HepG2 (cell line): ENCODE measurements at regions of chr20 and their contacts with region 1.

Region 1: DNA sequence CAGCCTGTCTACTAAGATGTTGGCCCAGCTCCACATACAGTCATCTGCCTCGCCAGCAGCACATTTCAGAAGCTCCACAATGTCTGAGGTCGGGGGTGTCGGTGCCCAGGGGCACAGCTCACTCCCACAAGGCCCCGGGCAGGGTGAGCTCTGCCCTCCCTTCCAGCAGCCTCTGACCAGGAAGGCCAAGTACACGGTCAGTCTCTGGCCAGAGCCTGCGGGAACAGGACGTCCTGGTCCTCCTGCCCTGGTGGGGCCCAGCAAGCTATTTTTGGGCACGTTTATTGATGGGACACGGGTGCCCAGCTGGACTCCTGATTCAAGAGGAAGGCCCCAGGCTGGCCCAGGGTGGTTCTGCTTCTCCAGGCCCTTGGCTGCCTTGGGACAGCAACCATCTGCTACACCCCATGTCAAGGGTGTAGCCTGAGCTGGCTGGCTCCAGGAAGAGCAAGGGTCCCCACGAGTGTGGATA is 114.9 kb upstream of the PTPN1 start:
- DNase-seq: no peak
- ATAC-seq: no peak
- H3K4me3 ChIP-seq: no peak overlapping the region
- H3K27ac ChIP-seq: peak overlapping the region; percentile 23
- H3K4me1 ChIP-seq: peaks cover 95% of the 10 kb centered on the region
- H3K27me3 ChIP-seq: no peaks in the 10 kb centered on the region
- CTCF ChIP-seq: no peak
- EP300 ChIP-seq: no peak
- POLR2A ChIP-seq: no peak
- RAD21 ChIP-seq: no peak

Region 2: DNA sequence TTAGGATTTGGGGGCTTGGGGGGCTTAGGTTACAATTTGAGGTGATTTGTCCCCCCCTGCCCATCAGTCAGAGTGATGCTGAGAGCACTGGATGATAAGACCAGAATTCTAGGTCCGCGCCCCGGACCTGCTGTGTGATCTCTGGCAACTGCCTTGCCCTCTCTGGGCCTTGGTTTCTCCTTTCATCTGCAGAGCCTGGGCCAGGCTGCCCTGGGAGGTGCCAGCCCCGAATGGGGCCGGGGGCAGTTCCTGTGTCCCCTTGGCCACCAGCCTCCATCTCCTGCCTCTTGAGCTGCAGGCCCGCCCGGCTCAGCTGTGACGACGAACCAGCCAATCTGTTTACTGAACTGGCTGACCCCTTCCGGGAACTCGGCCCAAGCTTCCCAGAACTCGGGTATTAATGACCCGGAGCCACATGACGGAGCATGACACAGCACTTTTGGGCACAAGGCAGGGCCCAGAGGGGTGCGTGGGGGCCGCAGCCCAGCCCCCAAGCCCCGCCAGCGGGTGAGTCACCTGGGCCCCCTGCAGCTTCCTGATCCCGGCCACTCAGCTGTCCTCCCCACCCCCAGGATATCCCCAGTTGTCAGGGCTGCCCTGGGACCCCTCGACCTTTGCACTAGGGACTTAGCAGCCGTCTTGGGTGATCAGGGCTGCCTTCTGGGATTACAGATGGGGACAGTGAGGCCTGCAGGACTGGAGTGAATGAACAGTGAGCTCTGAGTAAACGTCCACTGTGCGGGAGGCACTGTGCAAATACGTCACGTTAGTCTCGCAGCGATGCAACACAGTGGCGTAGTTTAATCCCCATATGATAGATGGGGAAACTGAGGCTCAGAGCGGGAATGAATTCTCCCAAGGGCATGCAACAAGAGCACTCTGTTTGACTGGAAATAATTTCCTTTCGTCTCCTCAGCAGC is 102.7 kb before region 1 on chr20:
- CTCF ChIA-PET with region 1: no interaction called
- POLR2A ChIA-PET with region 1: interaction called, 17 read pairs
- in situ Hi-C with region 1: loop called (anchors 5 kb)
- intact Hi-C with region 1: no loop called
- DNase-seq: peak; percentile 97
- ATAC-seq: peak; percentile 69
- H3K4me3 ChIP-seq: peak overlapping the region in 1 of 3 experiments; percentile 39; a peak in 3 of 6 replicates
- H3K27ac ChIP-seq: peak overlapping the region; percentile 77
- H3K4me1 ChIP-seq: peaks cover 68% of the 10 kb centered on the region
- H3K27me3 ChIP-seq: no peaks in the 10 kb centered on the region
- CTCF ChIP-seq: peak; percentile 41
- EP300 ChIP-seq: peak; percentile 96 to 99
- POLR2A ChIP-seq: peak in 1 of 2 experiments; percentile 14; a peak in 2 of 4 replicates
- RAD21 ChIP-seq: peak; percentile 63

Region 3: GRCh38 chr20:50366270-50367103 is 28.8 kb before region 1 on chr20:
- CTCF ChIA-PET with region 1: no interaction called
- POLR2A ChIA-PET with region 1: interaction called, 58 read pairs
- in situ Hi-C with region 1: no loop called
- intact Hi-C with region 1: loop called (anchors 1 kb)
- DNase-seq: peak; percentile 100
- ATAC-seq: peak; percentile 77
- H3K4me3 ChIP-seq: peak overlapping the region in 2 of 3 experiments; percentile 29 to 31; a peak in 2 of 6 replicates
- H3K27ac ChIP-seq: peak overlapping the region; percentile 71
- H3K4me1 ChIP-seq: peaks cover 87% of the 10 kb centered on the region
- H3K27me3 ChIP-seq: peaks cover 0 to 12% of the 10 kb centered on the region in 2 experiments; a peak in 3 of 5 replicates
- CTCF ChIP-seq: 0 out of 2 replicates have a peak, but pooled peaks have one; percentile 11
- EP300 ChIP-seq: peak; percentile 79 to 93
- POLR2A ChIP-seq: no peak
- RAD21 ChIP-seq: peak; percentile 8; the same call in 1 of the 2 replicates

Region 4: GRCh38 chr20:50409495-50409894 is 14.2 kb after region 1 on chr20:
- CTCF ChIA-PET with region 1: no interaction called
- POLR2A ChIA-PET with region 1: interaction called, 299 read pairs
- in situ Hi-C with region 1: no loop called
- intact Hi-C with region 1: no loop called
- DNase-seq: no peak
- ATAC-seq: no peak
- H3K4me3 ChIP-seq: no peak overlapping the region
- H3K27ac ChIP-seq: no peak overlapping the region
- H3K4me1 ChIP-seq: peaks cover 91% of the 10 kb centered on the region
- H3K27me3 ChIP-seq: no peaks in the 10 kb centered on the region
- CTCF ChIP-seq: no peak
- EP300 ChIP-seq: 0 out of 4 replicates have a peak, but pooled peaks of 1 of the 2 experiments have one; percentile 16
- POLR2A ChIP-seq: no peak
- RAD21 ChIP-seq: no peak

Region 5: DNA sequence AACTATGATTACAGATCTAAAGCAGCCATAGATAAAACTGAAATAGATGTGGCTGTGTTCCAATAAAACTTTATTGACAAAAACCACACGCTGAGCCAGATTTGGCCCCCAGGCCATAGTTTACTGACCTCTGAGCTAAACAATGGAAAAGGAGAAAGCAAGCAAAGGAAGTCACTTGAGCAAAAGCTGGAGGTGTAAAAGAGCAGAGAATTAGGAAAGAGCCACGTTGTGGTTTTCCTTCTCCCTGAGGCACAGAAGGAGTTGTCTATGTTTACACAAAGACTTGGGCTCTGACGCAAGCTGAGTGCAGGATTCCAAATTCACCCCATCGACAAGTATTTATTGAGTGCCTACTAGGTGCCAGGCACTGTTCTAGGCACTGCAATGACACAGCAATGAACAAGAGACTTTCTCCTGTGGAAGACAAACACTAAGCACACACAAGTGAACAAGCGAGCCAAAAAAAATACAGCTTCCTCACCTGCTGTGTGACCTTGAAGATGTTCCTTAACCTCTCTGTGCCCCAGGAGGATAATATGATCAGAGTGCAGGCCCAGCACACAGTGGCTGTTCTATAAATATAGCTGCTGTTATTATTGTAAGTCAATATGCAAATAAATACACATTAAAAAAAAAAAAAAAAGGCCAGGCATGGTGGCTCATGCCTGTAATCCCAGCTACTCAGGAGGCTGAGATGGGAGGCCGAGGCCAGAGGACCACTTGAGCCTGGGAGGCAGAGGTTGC is 39.5 kb after region 1 on chr20:
- CTCF ChIA-PET with region 1: no interaction called
- POLR2A ChIA-PET with region 1: interaction called, 29 read pairs
- in situ Hi-C with region 1: no loop called
- intact Hi-C with region 1: no loop called
- DNase-seq: peak; percentile 68
- ATAC-seq: no peak
- H3K4me3 ChIP-seq: no peak overlapping the region
- H3K27ac ChIP-seq: peak overlapping the region; percentile 5
- H3K4me1 ChIP-seq: peaks cover 91% of the 10 kb centered on the region
- H3K27me3 ChIP-seq: no peaks in the 10 kb centered on the region; a peak in 1 of 5 replicates
- CTCF ChIP-seq: no peak
- EP300 ChIP-seq: peak in 1 of 2 experiments; percentile 60; a peak in 2 of 4 replicates
- POLR2A ChIP-seq: no peak
- RAD21 ChIP-seq: no peak